ENCODE measurements at regions of chr1 and their contacts with region 1.

Region 1: DNA sequence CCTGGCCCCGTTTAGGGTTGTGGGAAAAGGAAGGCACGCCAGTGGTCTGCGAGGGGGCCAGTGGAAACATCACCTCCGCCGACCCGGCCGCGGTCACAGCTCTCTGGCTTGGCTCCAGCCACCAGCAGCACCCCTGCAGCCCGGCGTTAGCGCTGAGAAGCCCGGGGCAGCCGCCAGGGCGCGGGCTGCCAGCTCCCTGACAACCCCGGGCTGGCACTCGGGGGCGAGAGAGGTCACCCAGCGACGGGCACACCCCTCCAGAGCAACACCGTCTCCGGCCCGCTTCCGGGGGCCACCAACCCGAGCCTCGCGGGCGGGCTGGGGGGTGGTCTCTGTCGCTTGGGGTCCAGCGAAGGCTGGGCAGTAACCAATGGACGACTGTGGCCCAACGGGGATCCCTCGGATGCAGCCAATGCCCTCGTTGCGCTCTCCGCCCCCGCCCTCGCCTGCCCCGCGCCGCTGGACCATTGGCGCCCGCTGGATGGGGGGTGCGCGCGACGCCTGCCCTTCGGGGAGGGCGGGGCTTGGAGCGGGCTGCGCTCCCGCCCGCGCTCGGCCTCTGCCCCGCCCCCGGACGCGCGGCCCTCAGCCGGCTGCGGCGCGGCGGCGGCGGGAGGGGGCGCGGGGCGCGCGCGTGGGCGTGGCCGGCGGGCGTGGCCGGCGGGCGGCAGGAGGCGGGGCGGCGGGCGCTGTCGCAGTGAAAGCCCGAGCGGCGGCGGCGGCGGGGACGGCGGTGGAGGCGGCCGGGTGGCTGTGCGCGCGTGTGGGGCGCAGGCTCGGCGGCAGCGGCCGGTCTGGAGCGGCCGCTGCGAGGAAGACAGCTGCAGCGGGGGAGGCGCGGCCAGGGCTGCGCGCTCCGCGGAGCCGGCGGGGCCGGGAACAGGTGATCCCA is at the start of gene MAN1C1:
- DNase-seq: peak; percentile 93
- total RNA-seq, gene MAN1C1: 16.7 TPM

Region 2: DNA sequence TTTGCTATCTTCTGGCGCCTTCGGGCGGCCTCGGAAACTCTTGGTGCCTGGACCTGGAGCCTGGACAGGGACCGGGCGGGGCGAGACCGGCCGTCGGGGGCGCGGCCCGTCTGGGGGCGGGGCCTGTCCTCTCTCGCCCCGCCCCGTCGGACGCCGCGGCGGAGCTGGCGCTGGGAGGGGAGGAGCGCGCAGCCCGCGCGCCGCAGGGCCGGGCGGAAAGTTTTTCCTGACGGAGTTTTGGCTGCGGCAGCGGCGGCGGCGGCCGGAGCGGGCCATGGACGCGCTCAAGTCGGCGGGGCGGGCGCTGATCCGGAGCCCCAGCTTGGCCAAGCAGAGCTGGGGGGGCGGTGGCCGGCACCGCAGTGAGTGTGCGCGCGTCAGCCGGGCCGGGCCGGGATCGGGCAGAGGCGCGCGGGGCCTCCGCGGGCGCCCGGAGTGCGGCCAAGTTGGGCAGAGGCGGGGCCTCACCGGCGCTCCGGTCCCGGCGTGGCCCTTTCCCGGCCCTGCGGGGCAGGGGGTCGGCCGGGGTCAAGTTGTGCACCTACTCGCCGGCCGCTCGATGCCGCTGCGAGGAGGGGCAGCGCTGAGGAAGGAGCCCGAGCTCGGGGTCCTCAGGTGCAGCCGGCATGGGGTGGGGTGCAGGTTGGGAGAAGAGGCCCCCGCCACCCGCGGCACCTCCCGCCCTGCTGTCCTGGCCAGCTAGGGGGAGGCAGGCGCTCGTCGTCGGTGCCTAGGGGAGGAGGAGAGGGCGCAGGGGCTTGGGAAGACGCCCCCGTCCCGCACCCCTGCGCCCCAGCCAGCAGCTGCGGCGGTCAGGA is 72.7 kb before region 1 on chr1 and contains the start of gene LDLRAP1:
- intact Hi-C with region 1: loop called (anchors 5 kb)
- DNase-seq: peak; percentile 89
- total RNA-seq, gene LDLRAP1: 14.4 TPM

Region 3: GRCh38 chr1:25658791-25659431 is 42.6 kb after region 1 on chr1:
- intact Hi-C with region 1: loop called (anchors 5 kb)
- DNase-seq: peak; percentile 81

Region 4: GRCh38 chr1:25695090-25695770 is 78.9 kb after region 1 on chr1:
- intact Hi-C with region 1: loop called (anchors 2 kb)
- DNase-seq: peak; percentile 80

Region 5: GRCh38 chr1:25743826-25744581 is 127.7 kb after region 1 on chr1:
- intact Hi-C with region 1: loop called (anchors 2 kb)
- DNase-seq: no peak

Region 6: GRCh38 chr1:25858906-25859789 is 242.8 kb after region 1 on chr1 and contains the start of gene AUNIP:
- intact Hi-C with region 1: no loop called
- DNase-seq: peak; percentile 94
- total RNA-seq, gene AUNIP: not detected